Calu3 (cell line): ENCODE measurements at regions of chr9 and their contacts with region 1.

Region 1: GRCh38 chr9:112717661-112718341 is at the start of gene INIP:
- DNase-seq: peak; percentile 94
- H3K4me3 Mint-ChIP-seq: peak within 1 kb of the TSS; percentile 90
- H3K27ac Mint-ChIP-seq: peak within 1 kb of the TSS; percentile 94
- H3K4me1 Mint-ChIP-seq: no peaks in the 10 kb centered on the region
- H3K27me3 Mint-ChIP-seq: no peaks in the 10 kb centered on the region
- CTCF ChIP-seq: no peak
- total RNA-seq, gene INIP: 18.7 and 23.2 TPM in 2 replicates

Region 2: GRCh38 chr9:112750111-112750767 is 32.4 kb after region 1 on chr9 and contains the start of gene SNX30:
- CTCF ChIA-PET with region 1: interaction called, 8 read pairs
- intact Hi-C with region 1: loop called (anchors 5 kb)
- DNase-seq: peak; percentile 87
- H3K4me3 Mint-ChIP-seq: peak within 1 kb of the TSS; percentile 94
- H3K27ac Mint-ChIP-seq: peak within 1 kb of the TSS; percentile 81
- H3K4me1 Mint-ChIP-seq: peaks cover 19% of the 10 kb centered on the region
- H3K27me3 Mint-ChIP-seq: no peaks in the 10 kb centered on the region
- CTCF ChIP-seq: no peak
- total RNA-seq, gene SNX30: 7.9 and 8.7 TPM in 2 replicates

Region 3: GRCh38 chr9:112793213-112793810 is 75.5 kb after region 1 on chr9:
- CTCF ChIA-PET with region 1: interaction called, 7 read pairs
- intact Hi-C with region 1: loop called (anchors 5 kb)
- DNase-seq: peak; percentile 77
- H3K4me3 Mint-ChIP-seq: no peak overlapping the region
- H3K27ac Mint-ChIP-seq: no peak overlapping the region
- H3K4me1 Mint-ChIP-seq: peaks cover 13% of the 10 kb centered on the region
- H3K27me3 Mint-ChIP-seq: no peaks in the 10 kb centered on the region
- CTCF ChIP-seq: peak; percentile 73

Region 4: GRCh38 chr9:112898872-112899311 is 181.1 kb after region 1 on chr9:
- CTCF ChIA-PET with region 1: no interaction called
- intact Hi-C with region 1: loop called (anchors 5 kb)
- DNase-seq: no peak
- H3K4me3 Mint-ChIP-seq: no peak overlapping the region
- H3K27ac Mint-ChIP-seq: no peak overlapping the region
- H3K4me1 Mint-ChIP-seq: peaks cover 11% of the 10 kb centered on the region
- H3K27me3 Mint-ChIP-seq: peaks cover 9% of the 10 kb centered on the region
- CTCF ChIP-seq: no peak

Region 5: GRCh38 chr9:112939418-112939817 is 221.6 kb after region 1 on chr9:
- CTCF ChIA-PET with region 1: no interaction called
- intact Hi-C with region 1: no loop called
- DNase-seq: no peak
- H3K4me3 Mint-ChIP-seq: no peak overlapping the region
- H3K27ac Mint-ChIP-seq: no peak overlapping the region
- H3K4me1 Mint-ChIP-seq: no peaks in the 10 kb centered on the region
- H3K27me3 Mint-ChIP-seq: peaks cover 33% of the 10 kb centered on the region
- CTCF ChIP-seq: no peak